Posterior vena cava (tissue), 2 donors: ENCODE measurements at regions of chr3 and their contacts with region 1.

Region 1: GRCh38 chr3:69484507-69485393 is 98.9 kb upstream of the FRMD4B start:
- DNase-seq: no peak

Region 2: GRCh38 chr3:69510481-69511030 is 25.8 kb after region 1 on chr3:
- intact Hi-C with region 1: loop called in 1 of 2 experiments (anchors 2 kb)
- DNase-seq: no peak